ENCODE measurements at regions of chr15 and their contacts with region 1.

Region 1: GRCh38 chr15:52699457-52699856 is 20.3 kb upstream of the ATOSA start:
- DNase-seq: no peak
- H3K4me3 ChIP-seq: no peak overlapping the region
- H3K27ac ChIP-seq: no peak overlapping the region
- H3K4me1 ChIP-seq: no peaks in the 10 kb centered on the region
- H3K27me3 ChIP-seq: no peaks in the 10 kb centered on the region
- CTCF ChIP-seq: no peak
- EP300 ChIP-seq: no peak
- POLR2A ChIP-seq: no peak

Region 2: GRCh38 chr15:52636459-52636858 is 63.0 kb before region 1 on chr15:
- intact Hi-C with region 1: loop called in 1 of 4 experiments (anchors 10 kb)
- DNase-seq: no peak
- H3K4me3 ChIP-seq: no peak overlapping the region
- H3K27ac ChIP-seq: no peak overlapping the region
- H3K4me1 ChIP-seq: no peaks in the 10 kb centered on the region
- H3K27me3 ChIP-seq: no peaks in the 10 kb centered on the region
- CTCF ChIP-seq: no peak
- EP300 ChIP-seq: no peak
- POLR2A ChIP-seq: no peak

Region 3: DNA sequence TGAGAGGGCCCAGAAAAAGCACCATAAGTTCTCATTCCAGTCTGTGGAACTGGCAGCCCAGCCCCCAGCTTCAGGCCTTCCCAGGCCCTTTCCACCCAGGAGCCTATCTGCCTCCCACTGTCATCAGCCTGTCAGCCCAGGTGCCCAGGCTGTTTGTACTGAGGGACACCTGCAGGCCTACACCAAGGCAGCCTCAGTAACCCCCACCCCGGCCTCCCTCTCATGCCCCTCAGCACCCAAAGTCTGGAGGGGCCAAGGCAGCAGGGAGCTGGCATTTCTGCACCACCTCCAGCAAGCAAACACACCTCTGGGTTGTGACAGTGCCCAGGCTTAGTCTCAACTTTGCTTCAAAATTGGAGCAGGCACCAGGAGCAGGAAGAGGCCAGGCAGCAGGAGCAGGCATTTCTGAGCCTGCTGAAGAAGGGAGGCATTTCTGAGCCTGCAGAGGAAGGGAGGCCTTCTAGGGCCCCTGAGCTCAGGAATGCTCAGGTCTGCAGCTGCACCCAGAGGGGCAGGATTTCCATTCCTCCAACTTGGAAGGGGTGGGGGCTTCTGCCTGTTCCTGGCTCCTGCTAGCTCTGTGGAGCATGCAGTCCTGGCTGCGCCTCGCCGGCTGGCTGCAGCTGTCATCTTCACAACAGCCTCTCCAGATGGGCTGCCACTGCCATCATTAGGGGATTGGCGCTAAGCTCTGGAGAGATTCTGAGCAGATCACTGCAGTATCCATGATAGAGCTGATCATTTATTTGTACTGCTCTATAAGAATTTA is 1674.9 kb after region 1 on chr15:
- intact Hi-C with region 1: no loop called
- DNase-seq: no peak
- H3K4me3 ChIP-seq: no peak overlapping the region
- H3K27ac ChIP-seq: no peak overlapping the region
- H3K4me1 ChIP-seq: no peaks in the 10 kb centered on the region
- H3K27me3 ChIP-seq: peaks cover 3% of the 10 kb centered on the region
- CTCF ChIP-seq: no peak
- EP300 ChIP-seq: no peak
- POLR2A ChIP-seq: no peak

Measured in ovary (tissue), 10 donors.